Naive thymus-derived CD4-positive, alpha-beta T cell (primary cell): ENCODE measurements at regions of chr1 and their contacts with region 1.

Region 1: DNA sequence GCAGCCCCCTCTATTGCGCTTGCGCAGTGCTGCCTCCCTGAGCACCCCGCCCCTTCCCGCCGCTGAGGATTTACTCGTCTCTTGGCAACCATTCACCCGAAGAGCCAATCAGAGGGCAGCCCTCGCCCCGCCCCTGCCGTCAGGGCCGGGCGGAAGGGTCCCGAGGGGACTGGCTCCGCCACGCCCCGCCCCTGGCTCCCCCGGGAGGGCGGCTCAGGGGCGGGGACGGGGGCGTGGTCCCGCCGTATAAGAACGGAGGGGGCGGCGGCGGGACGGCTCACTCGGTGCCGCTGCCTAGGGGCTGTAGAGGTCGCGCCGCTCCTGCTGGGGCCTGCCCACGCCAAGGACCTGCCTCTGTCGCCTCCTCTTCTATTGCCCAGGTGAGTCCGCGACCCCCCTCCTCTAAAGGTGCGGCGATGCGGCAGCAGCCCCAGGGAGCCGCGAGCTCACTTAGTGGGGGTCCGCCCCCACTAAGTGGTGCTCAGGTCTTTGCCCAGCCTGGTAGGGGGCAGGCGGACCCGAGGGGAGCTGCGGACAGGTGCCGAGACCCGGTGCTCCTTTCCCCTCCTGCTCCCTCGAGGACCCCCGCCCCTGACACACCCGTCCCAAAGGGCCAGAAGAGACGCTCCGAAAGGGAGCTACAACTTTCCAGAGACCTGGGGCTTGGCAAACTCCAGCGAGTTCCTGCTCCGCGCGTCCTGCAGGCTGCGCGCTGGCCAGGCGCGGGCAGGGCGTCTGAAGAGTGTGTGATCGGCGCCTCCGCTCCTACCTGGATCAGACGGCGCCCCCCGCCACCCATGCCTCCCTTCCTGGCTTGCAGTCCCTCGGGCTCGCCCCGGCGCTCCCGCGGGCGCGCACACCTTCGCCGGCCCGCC is at the start of gene TENT5C:
- DNase-seq: peak; percentile 98 to 99 (median 99)
- ATAC-seq: peak; percentile 97
- H3K4me3 ChIP-seq: peak within 1 kb of the TSS; percentile 79
- H3K4me3 Mint-ChIP-seq: peak within 1 kb of the TSS; percentile 94 to 100 (median 98)
- H3K27ac ChIP-seq: peak within 1 kb of the TSS; percentile 86
- H3K27ac Mint-ChIP-seq: peak within 1 kb of the TSS; percentile 96 to 99 (median 97)
- H3K4me1 ChIP-seq: peaks cover 20 to 22% of the 10 kb centered on the region in 2 donors
- H3K4me1 Mint-ChIP-seq: peaks cover 25 to 44% (median 32%) of the 10 kb centered on the region in 7 donors
- H3K27me3 ChIP-seq: no peaks in the 10 kb centered on the region
- H3K27me3 Mint-ChIP-seq: peaks cover 0 to 42% (median 0%) of the 10 kb centered on the region in 5 donors
- total RNA-seq, gene TENT5C: 3.7 to 47.0 (median 12.9) TPM

Region 2: DNA sequence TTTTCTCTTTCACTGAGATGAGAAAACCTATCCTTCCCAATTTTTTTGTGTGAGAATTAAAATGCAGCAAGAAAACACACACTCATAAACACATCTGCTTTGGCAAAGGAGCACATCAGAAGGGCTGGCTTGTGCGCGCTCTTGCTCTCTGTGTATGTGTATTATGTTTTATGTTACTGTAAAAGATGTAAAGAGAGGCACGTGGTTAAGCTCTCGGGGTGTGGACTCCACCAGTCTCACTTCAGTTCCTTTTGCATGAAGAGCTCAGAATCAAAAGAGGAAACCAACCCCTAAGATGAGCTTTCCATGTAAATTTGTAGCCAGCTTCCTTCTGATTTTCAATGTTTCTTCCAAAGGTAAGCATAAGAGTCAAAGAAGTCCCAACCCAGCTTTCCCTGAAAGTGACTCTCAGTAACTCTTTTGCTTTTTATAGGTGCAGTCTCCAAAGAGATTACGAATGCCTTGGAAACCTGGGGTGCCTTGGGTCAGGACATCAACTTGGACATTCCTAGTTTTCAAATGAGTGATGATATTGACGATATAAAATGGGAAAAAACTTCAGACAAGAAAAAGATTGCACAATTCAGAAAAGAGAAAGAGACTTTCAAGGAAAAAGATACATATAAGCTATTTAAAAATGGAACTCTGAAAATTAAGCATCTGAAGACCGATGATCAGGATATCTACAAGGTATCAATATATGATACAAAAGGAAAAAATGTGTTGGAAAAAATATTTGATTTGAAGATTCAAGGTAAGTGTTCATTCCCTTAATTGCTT is 851.6 kb before region 1 on chr1 and contains the start of gene CD2:
- CTCF ChIA-PET with region 1: no interaction called
- POLR2A ChIA-PET with region 1: no interaction called
- intact Hi-C with region 1: loop called in 1 of 2 experiments (anchors 5 kb)
- DNase-seq: peak in 7 of 9 donors; percentile 58 to 79 (median 71)
- ATAC-seq: peak; percentile 91
- H3K4me3 ChIP-seq: peak within 1 kb of the TSS; percentile 90
- H3K4me3 Mint-ChIP-seq: peak within 1 kb of the TSS; percentile 91 to 100 (median 98)
- H3K27ac ChIP-seq: peak within 1 kb of the TSS; percentile 89
- H3K27ac Mint-ChIP-seq: peak within 1 kb of the TSS; percentile 93 to 99 (median 97)
- H3K4me1 ChIP-seq: peaks cover 27 to 31% of the 10 kb centered on the region in 2 donors
- H3K4me1 Mint-ChIP-seq: peaks cover 25 to 47% (median 43%) of the 10 kb centered on the region in 7 donors
- H3K27me3 ChIP-seq: no peaks in the 10 kb centered on the region
- H3K27me3 Mint-ChIP-seq: no peaks in the 10 kb centered on the region
- total RNA-seq, gene CD2: 105 to 307 (median 174) TPM

Region 3: GRCh38 chr1:117121776-117122697 is 484.0 kb before region 1 on chr1:
- CTCF ChIA-PET with region 1: no interaction called
- POLR2A ChIA-PET with region 1: no interaction called
- intact Hi-C with region 1: loop called (anchors 2 to 5 kb)
- DNase-seq: peak; percentile 64 to 81 (median 74)
- ATAC-seq: peak; percentile 90
- H3K4me3 ChIP-seq: peak overlapping the region; percentile 97
- H3K4me3 Mint-ChIP-seq: peak overlapping the region; percentile 83 to 90 (median 87)
- H3K27ac ChIP-seq: peak overlapping the region; percentile 61
- H3K27ac Mint-ChIP-seq: peak overlapping the region in 2 of 9 donors; percentile 16 to 53
- H3K4me1 ChIP-seq: peaks cover 0 to 4% of the 10 kb centered on the region in 2 donors
- H3K4me1 Mint-ChIP-seq: peaks cover 0 to 13% (median 4%) of the 10 kb centered on the region in 7 donors
- H3K27me3 ChIP-seq: no peaks in the 10 kb centered on the region
- H3K27me3 Mint-ChIP-seq: peaks cover 5 to 21% (median 6%) of the 10 kb centered on the region in 5 donors

Region 4: DNA sequence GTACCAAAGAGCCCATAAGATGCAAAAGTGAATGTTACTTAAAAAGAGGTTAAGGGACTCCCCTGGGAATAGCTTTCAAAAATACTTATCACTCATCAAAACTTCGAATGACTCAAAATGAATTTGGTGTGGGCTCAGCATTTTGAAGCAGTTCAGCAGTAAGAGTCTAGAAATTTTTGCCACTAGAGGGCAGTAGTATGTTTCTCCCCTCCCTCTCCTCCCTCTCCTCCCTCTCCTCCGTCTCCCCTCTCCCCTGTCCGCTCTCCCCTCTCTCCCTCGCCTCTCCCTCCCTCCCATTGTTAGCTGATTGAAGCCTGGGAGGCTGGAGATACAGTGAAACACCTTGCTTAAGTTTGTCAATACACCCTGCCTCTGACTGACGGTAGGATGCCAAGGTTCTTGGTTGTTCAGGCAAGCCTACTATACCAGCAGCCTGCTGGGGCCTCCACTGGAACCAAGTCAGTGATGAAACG is 71.0 kb before region 1 on chr1:
- CTCF ChIA-PET with region 1: interaction called, 12 read pairs
- POLR2A ChIA-PET with region 1: interaction called, 7 read pairs
- intact Hi-C with region 1: loop called (anchors 1 kb)
- DNase-seq: peak; percentile 22 to 74 (median 60)
- ATAC-seq: peak; percentile 88
- H3K4me3 ChIP-seq: no peak overlapping the region
- H3K4me3 Mint-ChIP-seq: peak overlapping the region in 1 of 10 donors; percentile 17
- H3K27ac ChIP-seq: no peak overlapping the region
- H3K27ac Mint-ChIP-seq: peak overlapping the region in 4 of 9 donors; percentile 1 to 36 (median 14)
- H3K4me1 ChIP-seq: peaks cover 7 to 8% of the 10 kb centered on the region in 2 donors
- H3K4me1 Mint-ChIP-seq: peaks cover 0 to 9% (median 3%) of the 10 kb centered on the region in 7 donors
- H3K27me3 ChIP-seq: no peaks in the 10 kb centered on the region
- H3K27me3 Mint-ChIP-seq: no peaks in the 10 kb centered on the region

Region 5: DNA sequence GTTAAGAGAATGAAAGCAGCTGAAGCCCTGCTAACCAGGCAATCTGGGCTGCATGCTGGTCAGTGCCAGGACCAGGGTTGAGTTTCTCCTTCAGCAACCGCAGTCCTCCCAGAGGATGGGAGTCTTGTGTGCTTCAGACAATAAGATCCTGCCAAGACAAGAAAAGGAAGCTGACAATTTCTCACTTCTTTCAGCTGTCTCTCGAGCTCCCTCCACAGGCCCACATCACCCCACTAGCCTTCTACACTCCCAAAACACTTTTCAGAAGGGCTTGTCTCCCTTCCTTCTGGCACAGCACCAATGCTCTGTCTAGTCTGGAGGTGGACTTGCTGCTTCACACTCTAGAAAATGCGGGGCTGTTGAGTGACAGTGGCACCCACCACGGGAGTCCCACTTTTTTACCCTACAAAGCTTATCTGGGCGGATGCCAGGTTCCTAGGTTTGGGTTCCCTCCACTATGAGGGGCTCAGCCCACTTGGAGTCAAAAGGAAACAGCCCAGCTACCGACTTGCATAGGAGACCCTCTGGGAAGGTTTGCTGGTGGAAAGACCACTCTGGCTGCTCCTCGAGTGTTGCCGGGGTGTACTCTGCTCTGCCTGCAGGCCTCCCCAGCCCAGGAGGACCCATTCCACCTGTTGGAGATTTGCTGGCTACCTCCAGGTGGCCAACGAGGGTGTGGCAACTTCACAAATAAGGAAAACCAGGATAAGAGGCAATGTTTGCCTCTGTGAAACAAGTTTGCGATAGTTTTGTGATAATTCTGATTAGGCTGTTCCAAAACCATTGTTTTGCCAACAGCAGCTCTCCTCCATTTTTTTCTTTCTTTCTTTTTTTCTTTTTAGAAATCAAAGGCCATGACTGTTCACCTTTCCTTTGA is 68.7 kb after region 1 on chr1:
- CTCF ChIA-PET with region 1: interaction called, 17 read pairs
- POLR2A ChIA-PET with region 1: interaction called, 12 read pairs
- intact Hi-C with region 1: loop called (anchors 1 to 2 kb)
- DNase-seq: peak in 7 of 9 donors; percentile 52 to 67 (median 58)
- ATAC-seq: peak; percentile 80
- H3K4me3 ChIP-seq: no peak overlapping the region
- H3K4me3 Mint-ChIP-seq: no peak overlapping the region
- H3K27ac ChIP-seq: no peak overlapping the region
- H3K27ac Mint-ChIP-seq: peak overlapping the region in 3 of 9 donors; percentile 53 to 68 (median 65)
- H3K4me1 ChIP-seq: peaks cover 0 to 5% of the 10 kb centered on the region in 2 donors
- H3K4me1 Mint-ChIP-seq: peaks cover 0 to 25% (median 4%) of the 10 kb centered on the region in 7 donors
- H3K27me3 ChIP-seq: no peaks in the 10 kb centered on the region
- H3K27me3 Mint-ChIP-seq: peaks cover 0 to 32% (median 0%) of the 10 kb centered on the region in 5 donors

Region 6: GRCh38 chr1:117929173-117929989 is 323.4 kb after region 1 on chr1 and contains the starts of genes GDAP2 and WDR3:
- CTCF ChIA-PET with region 1: no interaction called
- POLR2A ChIA-PET with region 1: no interaction called
- intact Hi-C with region 1: loop called (anchors 1 kb)
- DNase-seq: peak; percentile 84 to 98 (median 94)
- ATAC-seq: peak; percentile 96
- H3K4me3 ChIP-seq: peak within 1 kb of the TSS; percentile 94
- H3K4me3 Mint-ChIP-seq: peak within 1 kb of the TSS; percentile 90 to 97 (median 94)
- H3K27ac ChIP-seq: peak within 1 kb of the TSS; percentile 89
- H3K27ac Mint-ChIP-seq: peak within 1 kb of the TSS; percentile 74 to 97 (median 94)
- H3K4me1 ChIP-seq: peaks cover 24 to 30% of the 10 kb centered on the region in 2 donors
- H3K4me1 Mint-ChIP-seq: peaks cover 41 to 79% (median 71%) of the 10 kb centered on the region in 7 donors
- H3K27me3 ChIP-seq: no peaks in the 10 kb centered on the region
- H3K27me3 Mint-ChIP-seq: peaks cover 0 to 2% (median 0%) of the 10 kb centered on the region in 5 donors
- total RNA-seq, gene GDAP2: 22.3 to 31.2 (median 25.2) TPM
- total RNA-seq, gene WDR3: 12.2 to 34.6 (median 30.0) TPM